ENCODE measurements at regions of chr1 and their contacts with region 1.

Region 1: DNA sequence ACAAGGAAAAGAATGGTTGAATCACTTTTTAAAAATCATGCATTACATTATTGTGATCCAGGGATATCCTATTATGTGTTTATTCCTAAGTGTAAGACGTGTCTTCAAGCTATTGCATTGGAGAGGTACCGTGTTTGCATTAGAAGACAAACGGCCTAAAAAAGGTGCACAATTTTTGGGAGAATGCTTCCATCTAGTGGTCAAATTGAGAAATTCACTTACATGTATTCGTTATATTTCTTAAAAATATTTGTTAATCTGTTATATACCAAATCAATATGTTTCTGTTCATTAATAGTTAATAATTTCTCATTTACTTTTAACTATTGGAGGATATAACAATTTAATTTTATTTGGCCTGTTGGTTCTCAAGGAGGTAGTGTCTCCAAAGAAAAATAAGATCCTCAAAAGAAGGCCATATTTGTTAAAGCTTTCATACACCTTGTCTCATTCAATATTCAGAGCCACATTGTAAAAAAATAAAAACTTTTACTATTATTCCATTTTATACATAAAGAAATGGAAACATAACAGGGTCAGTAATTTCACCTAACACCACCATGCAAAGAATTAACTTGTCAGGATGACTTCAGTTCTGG is 40.5 kb upstream of the KCTD3 start:
- DNase-seq: peak; percentile 30
- ATAC-seq: peak; percentile 79
- H3K4me3 ChIP-seq: no peak overlapping the region
- H3K27ac ChIP-seq: no peak overlapping the region
- H3K4me1 ChIP-seq: no peaks in the 10 kb centered on the region
- H3K27me3 ChIP-seq: peaks cover 2% of the 10 kb centered on the region; the same call in 1 of the 2 replicates
- CTCF ChIP-seq: peak; percentile 67; the same call in 1 of the 2 replicates

Region 2: DNA sequence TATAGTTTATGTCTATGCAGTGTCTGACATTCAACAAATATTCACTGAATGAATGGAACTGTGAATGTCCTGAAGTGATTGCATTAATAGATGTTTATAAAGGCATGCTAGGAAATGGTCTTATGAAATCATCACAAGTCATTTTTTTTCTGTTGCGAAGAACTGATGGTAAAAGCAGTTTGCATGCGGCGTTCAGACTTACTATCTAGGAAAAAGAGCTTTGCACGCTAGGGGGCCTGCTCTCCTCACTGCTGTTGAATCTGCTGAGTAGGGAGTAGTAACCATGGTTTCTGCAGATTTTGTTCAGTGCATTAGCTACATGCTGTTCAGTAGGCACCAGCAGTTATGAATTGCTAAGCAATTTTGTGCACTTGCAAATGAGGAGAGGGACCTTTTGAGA is 865.8 kb before region 1 on chr1:
- CTCF ChIA-PET with region 1: no interaction called
- POLR2A ChIA-PET with region 1: no interaction called
- in situ Hi-C with region 1: no loop called
- intact Hi-C with region 1: loop called (anchors 5 kb)
- DNase-seq: no peak
- ATAC-seq: peak; percentile 66
- H3K4me3 ChIP-seq: no peak overlapping the region
- H3K27ac ChIP-seq: no peak overlapping the region
- H3K4me1 ChIP-seq: no peaks in the 10 kb centered on the region
- H3K27me3 ChIP-seq: no peaks in the 10 kb centered on the region
- CTCF ChIP-seq: peak; percentile 48

Region 3: DNA sequence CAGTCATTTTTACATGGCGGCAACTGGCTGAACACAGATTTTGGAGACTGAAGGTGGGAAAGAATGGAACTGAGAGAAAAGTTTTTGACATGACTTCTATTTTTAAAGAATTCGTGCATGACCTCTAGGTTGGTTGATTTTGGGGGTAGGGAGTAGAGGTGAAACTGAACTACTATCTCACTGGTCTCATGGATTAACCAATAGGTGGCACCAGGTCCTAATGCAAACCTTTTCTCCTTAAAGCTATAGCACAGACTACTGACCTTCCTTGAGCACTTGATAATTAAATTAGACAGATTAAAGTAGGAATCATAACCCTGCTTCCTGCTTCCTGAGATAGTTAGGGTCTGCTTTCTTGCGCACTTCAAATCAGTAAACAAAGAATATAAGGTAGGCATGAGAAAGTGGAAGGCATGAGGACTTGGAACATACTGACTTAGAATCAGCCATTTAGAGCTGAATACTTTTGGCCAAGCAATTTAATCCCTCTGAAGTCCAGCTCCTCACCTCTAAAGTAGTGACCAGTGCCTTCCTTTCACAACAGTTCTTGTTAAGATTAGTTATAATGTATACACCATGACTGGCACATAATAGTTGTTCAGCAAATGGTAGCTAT is 717.7 kb before region 1 on chr1:
- CTCF ChIA-PET with region 1: interaction called, 5 read pairs
- POLR2A ChIA-PET with region 1: no interaction called
- in situ Hi-C with region 1: no loop called
- intact Hi-C with region 1: loop called (anchors 10 kb)
- DNase-seq: no peak
- ATAC-seq: peak; percentile 65; the same call in 1 of the 2 replicates
- H3K4me3 ChIP-seq: no peak overlapping the region
- H3K27ac ChIP-seq: no peak overlapping the region
- H3K4me1 ChIP-seq: no peaks in the 10 kb centered on the region
- H3K27me3 ChIP-seq: no peaks in the 10 kb centered on the region
- CTCF ChIP-seq: peak; percentile 51

Region 4: GRCh38 chr1:215132156-215132555 is 394.5 kb before region 1 on chr1:
- CTCF ChIA-PET with region 1: no interaction called
- POLR2A ChIA-PET with region 1: no interaction called
- in situ Hi-C with region 1: no loop called
- intact Hi-C with region 1: no loop called
- DNase-seq: no peak
- ATAC-seq: no peak
- H3K4me3 ChIP-seq: no peak overlapping the region
- H3K27ac ChIP-seq: no peak overlapping the region
- H3K4me1 ChIP-seq: no peaks in the 10 kb centered on the region
- H3K27me3 ChIP-seq: no peaks in the 10 kb centered on the region
- CTCF ChIP-seq: no peak

Region 5: GRCh38 chr1:215146341-215146826 is 380.3 kb before region 1 on chr1:
- CTCF ChIA-PET with region 1: no interaction called
- POLR2A ChIA-PET with region 1: no interaction called
- in situ Hi-C with region 1: no loop called
- intact Hi-C with region 1: loop called (anchors 10 kb)
- DNase-seq: no peak
- ATAC-seq: no peak
- H3K4me3 ChIP-seq: no peak overlapping the region
- H3K27ac ChIP-seq: no peak overlapping the region
- H3K4me1 ChIP-seq: no peaks in the 10 kb centered on the region
- H3K27me3 ChIP-seq: no peaks in the 10 kb centered on the region
- CTCF ChIP-seq: peak; percentile 69; the same call in 1 of the 2 replicates

Region 6: DNA sequence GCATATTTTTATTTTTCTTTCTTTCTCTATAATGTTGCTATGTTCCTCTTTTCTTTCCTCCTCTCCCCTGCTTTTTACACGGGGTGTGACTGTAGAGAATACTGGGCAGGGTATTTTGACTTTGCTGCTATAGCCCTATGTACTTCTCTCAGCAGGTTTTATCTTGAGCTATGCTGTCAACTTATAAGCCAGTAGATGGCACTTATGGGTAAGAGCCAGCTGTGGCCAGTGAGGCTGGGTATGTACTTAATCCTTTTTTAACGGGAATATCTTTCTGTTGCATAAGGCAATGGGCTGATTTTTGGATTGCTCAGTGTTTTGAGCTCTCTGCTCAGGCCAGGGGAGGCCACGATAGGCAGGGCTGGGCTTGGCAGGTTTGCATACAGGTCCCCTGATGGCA is 345.1 kb before region 1 on chr1:
- CTCF ChIA-PET with region 1: interaction called, 4 read pairs
- POLR2A ChIA-PET with region 1: no interaction called
- in situ Hi-C with region 1: no loop called
- intact Hi-C with region 1: loop called (anchors 10 kb)
- DNase-seq: no peak
- ATAC-seq: no peak
- H3K4me3 ChIP-seq: no peak overlapping the region
- H3K27ac ChIP-seq: no peak overlapping the region
- H3K4me1 ChIP-seq: no peaks in the 10 kb centered on the region
- H3K27me3 ChIP-seq: no peaks in the 10 kb centered on the region
- CTCF ChIP-seq: peak; percentile 32